Activated CD4-positive, alpha-beta T cell treated with anti-CD3 and anti-CD28 coated beads for 36 hours (primary cell): ENCODE measurements at regions of chr20 and their contacts with region 1.

Region 1: DNA sequence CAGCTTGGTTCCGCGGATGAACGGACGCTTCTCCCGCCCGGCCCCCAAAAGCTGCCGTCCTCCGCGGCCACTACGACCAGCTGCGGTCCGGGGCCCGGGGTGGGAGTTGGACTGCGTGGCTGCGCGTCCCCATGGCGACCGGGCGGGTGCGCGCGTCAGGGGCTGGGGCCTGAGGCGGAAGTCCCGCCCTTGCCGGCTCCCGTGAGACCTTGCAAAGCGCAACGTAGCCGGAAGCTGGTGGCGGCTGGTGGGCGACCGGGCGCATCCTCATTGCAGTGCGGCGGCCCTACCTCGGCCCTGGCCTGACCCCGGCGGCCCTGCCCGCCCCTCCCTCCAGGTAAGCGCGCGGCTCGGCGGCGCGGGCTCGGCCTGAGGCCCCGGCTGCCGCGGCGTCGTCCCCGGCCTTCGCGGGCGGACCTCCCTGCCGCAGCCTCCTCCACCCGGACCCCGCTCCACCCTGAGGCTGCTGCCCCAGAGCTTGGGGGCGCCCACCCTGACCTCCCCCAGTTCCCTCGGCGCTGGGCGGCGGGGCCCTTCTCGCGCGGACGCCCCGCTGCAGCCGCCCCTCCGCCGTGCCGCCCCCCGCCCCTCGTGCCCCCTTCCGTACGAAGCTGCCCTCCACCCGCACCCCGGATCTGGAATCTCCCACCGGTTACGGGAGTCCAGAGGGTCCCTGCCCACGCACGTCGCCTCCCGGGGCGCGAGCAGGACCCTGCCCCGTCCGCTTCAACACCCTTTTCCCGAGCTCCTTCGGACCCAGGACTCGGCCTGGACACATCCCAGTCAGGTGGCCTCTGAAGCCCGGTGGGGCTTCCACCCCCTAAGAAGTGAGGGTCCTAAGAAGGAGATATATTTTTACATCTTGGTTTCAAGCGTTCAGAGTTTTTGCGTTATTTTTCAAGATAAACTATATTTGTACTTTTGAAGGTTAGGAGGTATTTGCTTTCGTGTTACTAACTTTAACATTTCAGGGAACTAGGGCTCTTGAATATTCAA is at the start of gene ARFGAP1:
- DNase-seq: peak; percentile 94
- ATAC-seq: peak; percentile 99
- H3K4me3 Mint-ChIP-seq: peak within 1 kb of the TSS; percentile 79
- H3K27ac Mint-ChIP-seq: peak within 1 kb of the TSS; percentile 83
- H3K4me1 Mint-ChIP-seq: peaks cover 27% of the 10 kb centered on the region
- H3K27me3 Mint-ChIP-seq: no peaks in the 10 kb centered on the region
- total RNA-seq, gene ARFGAP1: 73.4 to 77.6 TPM

Region 2: DNA sequence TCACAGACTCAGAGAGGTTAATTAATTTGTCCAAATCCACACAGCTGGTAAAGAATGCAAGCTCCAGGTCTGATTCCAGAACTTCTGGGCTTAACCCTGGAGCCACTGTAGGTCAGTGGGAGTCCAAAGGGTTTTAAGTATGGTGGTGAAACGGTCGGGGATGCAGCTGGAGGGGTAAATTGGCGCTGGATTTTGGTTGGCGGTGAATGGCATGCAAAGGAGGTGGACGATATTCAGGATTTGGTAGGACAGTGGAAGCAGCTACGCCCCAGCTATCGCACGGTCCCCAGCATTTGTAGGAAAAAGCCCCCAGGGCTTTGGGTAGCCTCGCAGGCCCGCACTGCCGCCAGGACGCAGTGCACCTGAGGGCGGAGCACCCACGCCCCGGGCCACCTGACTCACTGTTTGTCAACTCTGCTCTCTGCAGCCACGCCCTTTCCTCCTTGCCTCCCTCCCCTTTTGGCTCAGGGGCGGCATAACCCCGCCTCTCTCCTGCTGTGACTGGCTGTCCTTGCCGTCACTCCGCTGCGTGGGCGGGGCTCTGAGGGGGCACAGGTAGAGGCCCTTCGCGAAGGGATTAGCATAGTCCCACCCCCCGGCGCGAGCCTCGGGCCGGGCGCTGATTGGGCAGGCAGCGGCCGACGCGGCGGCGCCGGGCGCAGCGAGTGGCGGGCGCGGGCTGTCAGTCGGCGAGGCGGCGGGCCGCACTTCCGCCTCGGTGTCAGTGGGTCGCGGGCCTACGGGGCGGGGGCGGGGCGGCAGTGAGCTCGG is 1034.9 kb before region 1 on chr20 and contains the start of gene OSBPL2:
- CTCF ChIA-PET with region 1: no interaction called
- POLR2A ChIA-PET with region 1: no interaction called
- intact Hi-C with region 1: loop called in 1 of 2 experiments (anchors 2 kb)
- DNase-seq: peak; percentile 100
- ATAC-seq: peak; percentile 99
- H3K4me3 Mint-ChIP-seq: peak within 1 kb of the TSS; percentile 77
- H3K27ac Mint-ChIP-seq: peak within 1 kb of the TSS; percentile 74
- H3K4me1 Mint-ChIP-seq: peaks cover 34% of the 10 kb centered on the region
- H3K27me3 Mint-ChIP-seq: no peaks in the 10 kb centered on the region
- total RNA-seq, gene OSBPL2: 19.2 to 23.0 TPM

Region 3: DNA sequence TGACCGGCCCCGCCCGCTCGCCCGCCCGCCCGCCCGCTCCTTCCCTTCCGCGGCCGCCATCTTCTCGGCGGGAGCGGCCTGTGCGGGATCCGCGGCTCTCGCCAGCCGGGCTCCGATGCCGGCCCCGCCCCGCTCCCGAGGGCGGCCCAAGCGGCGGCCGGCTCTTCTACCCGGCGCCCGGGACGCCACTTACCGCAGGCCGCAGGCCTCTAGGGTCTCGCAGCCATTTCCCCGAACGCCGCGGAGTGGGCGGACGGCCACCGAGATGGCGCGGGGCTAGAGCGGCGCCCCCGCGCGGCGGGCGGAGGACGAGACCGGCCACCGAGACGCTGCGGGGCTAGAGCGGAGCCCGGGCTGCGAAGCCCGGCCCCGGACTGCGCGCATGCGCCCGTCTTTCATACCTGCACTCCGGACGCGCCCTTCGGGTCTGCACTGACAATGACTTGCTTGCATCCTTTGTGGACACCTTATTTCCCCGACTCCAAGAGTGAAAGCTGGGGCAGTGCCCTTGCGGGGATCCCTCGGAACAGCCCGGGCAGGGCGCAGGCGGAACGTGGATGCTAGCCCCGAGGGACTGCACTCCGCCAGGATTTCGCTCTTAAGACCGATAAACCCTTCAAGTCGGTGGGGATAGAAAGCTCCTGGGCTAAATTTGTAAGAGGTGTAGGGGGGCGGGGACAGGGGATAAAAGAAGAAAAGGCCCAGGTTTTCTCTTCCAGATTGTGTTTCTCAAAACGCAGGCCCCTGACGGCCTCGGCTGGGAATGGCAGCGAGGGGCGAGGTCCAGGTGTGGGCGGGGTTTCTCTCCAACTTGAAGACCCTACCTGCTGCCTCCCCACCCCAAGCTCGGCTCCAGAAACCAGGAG is 346.4 kb before region 1 on chr20 and contains the start of gene DIDO1:
- CTCF ChIA-PET with region 1: no interaction called
- POLR2A ChIA-PET with region 1: no interaction called
- intact Hi-C with region 1: loop called in 1 of 2 experiments (anchors 5 kb)
- DNase-seq: peak; percentile 94
- ATAC-seq: peak; percentile 78
- H3K4me3 Mint-ChIP-seq: peak within 1 kb of the TSS; percentile 94
- H3K27ac Mint-ChIP-seq: peak within 1 kb of the TSS; percentile 96
- H3K4me1 Mint-ChIP-seq: peaks cover 64% of the 10 kb centered on the region
- H3K27me3 Mint-ChIP-seq: no peaks in the 10 kb centered on the region
- total RNA-seq, gene DIDO1: 43.7 to 49.7 TPM

Region 4: DNA sequence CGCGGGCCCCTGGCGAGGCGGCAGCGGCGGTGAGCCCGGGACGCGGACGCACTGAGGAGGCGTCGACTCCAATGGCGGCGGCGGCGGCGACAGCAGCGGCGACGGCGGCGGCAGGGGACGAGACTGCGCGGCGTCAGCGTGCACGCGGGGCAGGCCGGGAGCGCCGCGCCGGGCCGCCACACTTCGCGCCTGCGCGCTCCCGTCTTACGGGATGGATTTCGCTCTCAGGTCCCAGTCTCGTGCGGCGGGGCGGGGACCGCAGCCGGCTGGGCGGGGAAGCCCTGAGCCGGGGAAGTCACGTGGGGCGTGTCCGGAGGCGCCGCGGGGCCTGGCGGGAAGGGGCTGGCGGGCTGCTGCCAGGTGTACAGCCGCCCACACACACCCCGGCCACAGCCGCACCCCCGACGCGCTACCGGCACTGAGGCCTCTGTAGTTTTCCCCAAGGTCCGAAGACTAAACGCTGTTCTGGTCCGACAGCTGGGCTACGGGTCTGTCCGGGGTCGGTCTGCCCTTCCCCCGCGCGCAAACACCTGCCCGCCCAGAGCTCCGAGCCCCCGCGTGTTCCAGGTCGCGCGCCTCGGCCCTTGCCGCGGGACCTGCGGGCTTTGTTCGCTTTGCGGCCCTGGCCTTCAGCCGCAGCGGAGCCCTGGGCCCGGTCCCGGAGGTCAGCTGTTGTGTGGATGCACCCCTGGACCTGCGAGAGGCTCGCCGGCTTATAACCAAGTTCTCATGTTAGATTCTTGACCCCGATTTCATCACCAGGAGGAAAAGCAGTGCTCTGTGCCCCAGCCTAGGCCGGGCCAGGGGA is 56.6 kb before region 1 on chr20 and contains the start of gene YTHDF1:
- CTCF ChIA-PET with region 1: no interaction called
- POLR2A ChIA-PET with region 1: interaction called, 4 read pairs
- intact Hi-C with region 1: loop called in 1 of 2 experiments (anchors 1 kb)
- DNase-seq: peak; percentile 98
- ATAC-seq: peak; percentile 98
- H3K4me3 Mint-ChIP-seq: peak within 1 kb of the TSS; percentile 92
- H3K27ac Mint-ChIP-seq: peak within 1 kb of the TSS; percentile 88
- H3K4me1 Mint-ChIP-seq: peaks cover 43% of the 10 kb centered on the region
- H3K27me3 Mint-ChIP-seq: peaks cover 4% of the 10 kb centered on the region
- total RNA-seq, gene YTHDF1: 32.2 to 32.6 TPM

Region 5: GRCh38 chr20:63553227-63553932 is 280.5 kb after region 1 on chr20:
- CTCF ChIA-PET with region 1: no interaction called
- POLR2A ChIA-PET with region 1: no interaction called
- intact Hi-C with region 1: loop called in 1 of 2 experiments (anchors 1 kb)
- DNase-seq: peak; percentile 95
- ATAC-seq: peak; percentile 88
- H3K4me3 Mint-ChIP-seq: no peak overlapping the region
- H3K27ac Mint-ChIP-seq: peak overlapping the region; percentile 45
- H3K4me1 Mint-ChIP-seq: peaks cover 11% of the 10 kb centered on the region
- H3K27me3 Mint-ChIP-seq: no peaks in the 10 kb centered on the region

Region 6: GRCh38 chr20:64062596-64063388 is 789.9 kb after region 1 on chr20 and contains the start of gene TCEA2:
- CTCF ChIA-PET with region 1: no interaction called
- POLR2A ChIA-PET with region 1: no interaction called
- intact Hi-C with region 1: loop called in 1 of 2 experiments (anchors 1 kb)
- DNase-seq: peak; percentile 98
- ATAC-seq: peak; percentile 83
- H3K4me3 Mint-ChIP-seq: peak within 1 kb of the TSS; percentile 82
- H3K27ac Mint-ChIP-seq: peak within 1 kb of the TSS; percentile 79
- H3K4me1 Mint-ChIP-seq: peaks cover 51% of the 10 kb centered on the region
- H3K27me3 Mint-ChIP-seq: no peaks in the 10 kb centered on the region
- total RNA-seq, gene TCEA2: 40.6 to 50.0 TPM